Adrenal gland (tissue), 19 donors: ENCODE measurements at regions of chr16 and their contacts with region 1.

Region 1: GRCh38 chr16:21083729-21084268 is 66.8 kb downstream of the DNAH3 start:
- DNase-seq: peak; percentile 52 to 82 (median 69)
- H3K4me3 ChIP-seq: no peak overlapping the region
- H3K27ac ChIP-seq: no peak overlapping the region
- H3K4me1 ChIP-seq: no peaks in the 10 kb centered on the region
- H3K27me3 ChIP-seq: no peaks in the 10 kb centered on the region
- CTCF ChIP-seq: peak; percentile 53 to 85 (median 77)
- POLR2A ChIP-seq: no peak

Region 2: DNA sequence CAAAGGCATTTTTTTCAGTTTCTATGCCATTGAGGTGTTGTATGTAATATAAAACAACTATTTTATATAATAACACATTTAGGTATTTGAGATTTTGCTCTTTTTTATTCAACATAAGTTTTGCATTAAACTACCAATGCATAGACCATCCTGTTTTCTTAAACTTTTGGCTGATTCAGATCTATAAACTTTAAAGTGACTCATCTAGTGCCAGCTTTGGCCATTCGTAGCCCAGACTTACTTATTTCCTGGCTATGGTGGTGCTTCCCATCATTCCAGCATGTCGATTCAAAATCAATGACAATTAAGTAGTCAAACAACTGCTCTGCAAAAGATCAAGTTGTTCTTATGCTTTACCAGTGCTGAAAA is 280.6 kb before region 1 on chr16:
- intact Hi-C with region 1: loop called in 1 of 2 experiments (anchors 5 kb)
- DNase-seq: no peak
- H3K4me3 ChIP-seq: no peak overlapping the region
- H3K27ac ChIP-seq: no peak overlapping the region
- H3K4me1 ChIP-seq: peaks cover 4 to 19% of the 10 kb centered on the region in 2 donors
- H3K27me3 ChIP-seq: no peaks in the 10 kb centered on the region
- CTCF ChIP-seq: no peak
- POLR2A ChIP-seq: no peak

Region 3: DNA sequence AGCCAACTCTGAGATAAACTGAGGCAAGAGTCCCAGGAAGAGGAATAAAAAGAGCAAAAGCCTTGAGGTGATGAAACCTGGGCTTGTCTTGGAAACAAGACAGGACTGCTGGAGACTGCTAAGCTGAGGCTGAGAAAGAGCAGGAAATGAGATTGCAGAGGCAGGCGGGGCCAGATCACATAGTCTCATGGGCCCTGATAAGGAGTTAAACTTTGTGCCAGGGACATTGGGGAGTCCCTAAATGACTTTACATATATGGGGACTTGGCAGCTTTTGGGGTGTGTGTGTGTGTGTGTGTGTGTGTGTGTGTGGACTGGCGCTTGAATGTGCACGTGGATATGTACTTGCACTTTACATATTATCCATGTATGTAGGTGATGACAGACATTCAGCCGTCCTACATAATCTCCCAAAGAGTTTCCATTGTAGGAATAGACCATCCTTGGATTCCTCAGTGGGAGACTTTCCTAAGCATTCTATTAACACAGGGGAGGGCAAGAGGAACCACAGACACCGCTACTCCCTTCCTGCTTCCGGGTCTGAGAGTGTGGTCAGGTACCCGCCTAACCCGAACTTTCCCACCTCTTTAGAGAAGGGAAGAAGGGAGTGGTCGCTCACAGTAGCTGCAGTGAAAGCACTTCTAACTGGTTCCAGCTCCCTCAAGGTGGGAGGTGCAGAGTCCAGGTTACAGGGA is 60.1 kb before region 1 on chr16:
- intact Hi-C with region 1: no loop called
- DNase-seq: no peak
- H3K4me3 ChIP-seq: no peak overlapping the region
- H3K27ac ChIP-seq: no peak overlapping the region
- H3K4me1 ChIP-seq: no peaks in the 10 kb centered on the region
- H3K27me3 ChIP-seq: no peaks in the 10 kb centered on the region
- CTCF ChIP-seq: no peak
- POLR2A ChIP-seq: no peak

Region 4: GRCh38 chr16:21277927-21278706 is 194.3 kb after region 1 on chr16 and contains the start of gene CRYM:
- intact Hi-C with region 1: no loop called
- DNase-seq: peak in 5 of 7 donors; percentile 46 to 60 (median 53)
- H3K4me3 ChIP-seq: peak within 1 kb of the TSS in 2 of 4 donors; percentile 15 to 54
- H3K27ac ChIP-seq: no peak within 1 kb of the TSS
- H3K4me1 ChIP-seq: peaks cover 3 to 6% of the 10 kb centered on the region in 2 donors
- H3K27me3 ChIP-seq: peaks cover 27% of the 10 kb centered on the region
- CTCF ChIP-seq: peak; percentile 46 to 79 (median 62)
- POLR2A ChIP-seq: no peak
- total RNA-seq, gene CRYM: 0.22 to 0.84 (median 0.42) TPM in 3 of 9 donors, not detected in the others